Activated CD4-positive, alpha-beta memory T cell treated with anti-CD3 and anti-CD28 coated beads for 36 hours (primary cell): ENCODE measurements at regions of chr12 and their contacts with region 1.

Region 1: GRCh38 chr12:22334410-22335290 is at the start of gene ST8SIA1:
- DNase-seq: peak; percentile 78
- H3K4me3 Mint-ChIP-seq: peak within 1 kb of the TSS; percentile 90
- H3K27ac Mint-ChIP-seq: peak within 1 kb of the TSS; percentile 89
- H3K4me1 Mint-ChIP-seq: peaks cover 49% of the 10 kb centered on the region
- H3K27me3 Mint-ChIP-seq: no peaks in the 10 kb centered on the region
- total RNA-seq, gene ST8SIA1: 9.5 to 9.6 TPM

Region 2: DNA sequence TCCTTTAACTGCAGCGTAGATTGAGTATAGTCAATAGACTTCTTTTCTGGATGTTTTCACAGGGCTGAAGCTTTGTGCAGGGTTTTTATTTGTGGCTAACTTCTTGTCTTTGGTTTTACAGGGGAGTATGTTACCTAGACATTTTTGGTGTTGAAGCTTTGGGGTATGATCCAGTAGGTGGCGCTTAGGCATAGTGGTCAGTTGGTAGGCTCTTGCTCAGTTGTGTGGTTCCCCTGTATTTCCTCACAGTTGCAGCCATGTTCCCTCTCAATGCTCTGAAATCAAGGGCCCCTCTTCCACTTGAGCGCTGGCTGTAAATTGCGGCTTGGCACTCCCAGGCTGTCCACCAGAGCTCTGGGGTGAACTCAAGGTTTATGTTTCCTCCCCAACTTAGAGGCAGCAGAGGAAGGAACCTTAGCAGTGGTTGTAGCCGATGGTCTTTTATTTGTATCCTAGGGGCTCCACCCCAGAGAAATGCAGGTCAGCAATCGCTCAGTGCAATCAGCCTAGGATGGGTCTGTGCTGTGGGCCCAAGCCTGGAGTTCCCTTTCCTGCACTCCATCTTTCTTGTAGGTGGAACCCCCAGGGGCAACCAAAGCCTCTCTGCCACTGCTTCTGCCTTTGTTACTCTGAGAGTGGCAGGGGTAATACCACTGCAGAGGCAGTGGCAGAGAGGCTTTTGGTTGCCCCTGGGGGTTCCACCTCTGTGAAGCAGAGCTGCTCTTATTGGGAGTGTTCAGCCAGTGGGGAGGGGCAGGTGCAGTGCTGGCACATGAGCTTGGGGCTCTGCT is 233.5 kb before region 1 on chr12:
- CTCF ChIA-PET with region 1: interaction called, 20 read pairs
- POLR2A ChIA-PET with region 1: interaction called, 4 read pairs
- intact Hi-C with region 1: loop called (anchors 1 kb)
- DNase-seq: peak; percentile 67
- H3K4me3 Mint-ChIP-seq: no peak overlapping the region
- H3K27ac Mint-ChIP-seq: peak overlapping the region; percentile 23
- H3K4me1 Mint-ChIP-seq: peaks cover 19% of the 10 kb centered on the region
- H3K27me3 Mint-ChIP-seq: no peaks in the 10 kb centered on the region

Region 3: DNA sequence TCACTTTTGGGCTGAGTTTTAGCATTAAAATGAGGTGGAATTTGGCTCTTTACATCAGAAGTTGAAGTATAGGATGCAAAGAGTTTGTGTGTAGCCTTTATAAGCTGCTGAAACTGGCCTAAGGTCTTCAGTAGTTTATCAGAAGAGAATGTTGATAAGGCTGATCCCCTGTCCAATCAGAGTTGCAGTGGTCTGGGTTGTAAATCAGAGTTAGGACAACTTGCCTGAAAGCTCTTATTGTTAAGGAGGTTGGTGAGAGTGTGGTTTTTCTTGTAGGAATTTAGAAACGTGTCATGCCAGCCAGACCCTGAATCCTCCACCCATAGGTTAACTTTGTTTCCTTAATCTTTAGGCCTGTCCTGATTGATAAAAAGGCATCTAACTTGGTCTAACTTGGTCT is 143.7 kb before region 1 on chr12:
- CTCF ChIA-PET with region 1: interaction called, 5 read pairs
- POLR2A ChIA-PET with region 1: no interaction called
- intact Hi-C with region 1: loop called (anchors 2 kb)
- DNase-seq: no peak
- H3K4me3 Mint-ChIP-seq: no peak overlapping the region
- H3K27ac Mint-ChIP-seq: no peak overlapping the region
- H3K4me1 Mint-ChIP-seq: peaks cover 4% of the 10 kb centered on the region
- H3K27me3 Mint-ChIP-seq: no peaks in the 10 kb centered on the region

Region 4: DNA sequence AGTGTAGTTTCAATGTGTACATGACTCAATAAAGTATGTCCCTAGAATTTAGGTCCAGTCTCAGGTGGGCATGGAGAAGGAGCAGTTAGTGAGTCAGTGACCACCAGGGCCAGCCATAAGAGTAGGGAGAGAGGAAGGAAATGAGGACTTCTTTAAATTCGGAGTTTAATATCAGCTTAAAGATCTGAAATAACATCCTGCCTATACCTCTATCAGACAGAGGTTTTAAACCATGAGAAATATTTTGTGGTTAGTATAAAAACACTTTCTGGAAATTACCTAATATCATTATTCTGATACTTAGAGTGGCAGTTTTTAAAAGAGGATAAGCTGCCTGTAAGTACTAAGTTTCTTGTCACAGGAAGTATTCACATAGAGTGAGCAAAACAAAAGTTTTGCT is 61.6 kb after region 1 on chr12:
- CTCF ChIA-PET with region 1: interaction called, 3 read pairs
- POLR2A ChIA-PET with region 1: interaction called, 4 read pairs
- intact Hi-C with region 1: loop called (anchors 1 kb)
- DNase-seq: peak; percentile 37
- H3K4me3 Mint-ChIP-seq: peak overlapping the region; percentile 61
- H3K27ac Mint-ChIP-seq: peak overlapping the region; percentile 75
- H3K4me1 Mint-ChIP-seq: peaks cover 43% of the 10 kb centered on the region
- H3K27me3 Mint-ChIP-seq: no peaks in the 10 kb centered on the region

Region 5: DNA sequence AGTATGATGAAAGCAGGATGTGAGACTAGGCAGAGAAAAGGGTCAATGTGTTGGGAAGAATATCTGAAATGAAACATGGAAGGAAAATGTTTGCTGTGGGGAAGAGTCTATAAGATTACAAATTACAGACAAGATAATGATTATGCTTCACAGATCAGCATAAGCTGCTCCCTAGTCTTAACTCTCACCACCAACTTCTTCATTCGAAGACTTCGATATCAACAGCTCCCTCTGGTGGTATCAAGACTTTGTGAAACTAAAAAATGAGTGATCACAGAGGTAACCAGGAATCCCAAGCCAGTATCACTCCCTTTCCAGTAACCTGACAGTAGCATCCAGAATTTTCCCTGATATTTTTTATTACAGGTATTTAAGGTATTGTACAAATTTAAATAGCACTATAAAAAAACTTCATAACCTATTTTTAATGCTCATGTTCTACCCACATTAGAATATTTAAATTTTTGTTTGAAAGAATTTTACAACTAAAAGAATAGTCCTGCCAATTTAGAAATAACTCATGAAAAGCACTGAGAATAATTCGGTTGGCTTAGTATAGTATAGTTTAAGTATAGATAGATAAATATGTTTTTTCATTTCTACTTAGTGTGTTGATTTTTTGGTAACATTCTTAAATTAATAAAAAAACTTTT is 125.3 kb after region 1 on chr12:
- CTCF ChIA-PET with region 1: interaction called, 11 read pairs
- POLR2A ChIA-PET with region 1: interaction called, 4 read pairs
- intact Hi-C with region 1: no loop called
- DNase-seq: no peak
- H3K4me3 Mint-ChIP-seq: no peak overlapping the region
- H3K27ac Mint-ChIP-seq: no peak overlapping the region
- H3K4me1 Mint-ChIP-seq: peaks cover 4% of the 10 kb centered on the region
- H3K27me3 Mint-ChIP-seq: no peaks in the 10 kb centered on the region